Transverse colon (tissue), 4 donors: ENCODE measurements at regions of chr12 and their contacts with region 1.

Region 1: DNA sequence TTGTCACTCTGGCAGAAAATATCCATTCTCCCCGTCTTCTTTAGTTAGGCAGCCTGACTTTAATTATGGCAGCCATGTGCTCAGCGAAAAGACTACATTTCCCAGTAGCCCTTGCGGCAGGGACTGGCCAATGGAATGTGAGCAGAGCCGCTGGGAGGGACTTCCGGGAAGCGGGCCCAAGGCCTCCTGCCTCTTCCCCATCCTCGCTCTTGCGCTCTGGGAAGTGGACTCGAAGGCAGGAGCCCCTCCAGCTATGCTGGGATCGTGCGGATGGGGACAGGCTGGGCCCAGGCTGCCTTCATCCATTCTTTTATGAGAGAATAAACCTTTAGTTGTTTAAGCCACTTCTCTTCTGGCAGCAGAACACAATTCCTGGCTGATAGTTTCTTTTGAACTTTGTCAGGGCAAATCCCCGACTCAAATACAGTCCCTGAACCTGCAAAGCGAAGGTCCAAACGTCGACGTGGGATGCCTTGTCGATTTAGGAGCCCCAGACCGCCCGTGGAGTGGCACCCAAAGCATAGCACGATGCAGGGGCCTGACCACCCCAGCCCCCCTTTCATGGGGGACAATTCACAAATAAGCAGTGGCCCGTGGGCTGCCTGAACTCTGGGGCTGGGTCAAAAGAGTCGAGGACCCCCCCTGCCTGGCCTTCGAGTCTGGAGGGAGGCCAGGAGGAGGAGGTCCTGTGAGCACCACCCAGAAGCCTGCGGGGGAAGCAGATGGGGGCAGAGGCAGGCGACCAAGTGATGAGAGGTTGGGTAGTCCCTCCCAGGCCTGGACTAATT is 15.6 kb upstream of the LRTM2 start:
- DNase-seq: peak; percentile 90
- H3K4me3 ChIP-seq: no peak overlapping the region
- H3K27ac ChIP-seq: peak overlapping the region in 1 of 4 donors; percentile 21
- H3K4me1 ChIP-seq: peaks cover 0 to 4% (median 0%) of the 10 kb centered on the region in 4 donors
- H3K27me3 ChIP-seq: no peaks in the 10 kb centered on the region
- CTCF ChIP-seq: no peak
- EP300 ChIP-seq: no peak
- POLR2A ChIP-seq: no peak

Region 2: DNA sequence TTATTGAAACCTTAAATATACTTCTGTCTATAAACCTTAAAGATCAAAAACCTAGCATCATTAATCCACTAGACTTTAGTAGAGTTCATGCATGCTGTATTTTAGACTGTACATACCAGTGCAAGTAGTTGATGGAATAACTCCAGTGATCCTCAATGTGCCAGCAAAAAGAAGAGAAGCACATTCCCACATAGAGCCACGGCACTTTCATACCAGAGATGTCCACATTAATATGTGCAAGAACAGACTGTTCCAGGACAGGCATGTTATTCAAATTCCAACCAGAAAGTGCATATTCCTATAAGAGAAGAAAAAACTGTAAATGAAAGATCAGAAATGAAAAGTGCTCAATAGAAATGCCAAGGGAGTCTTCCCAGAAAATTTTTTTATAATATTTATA is 1470.6 kb before region 1 on chr12:
- in situ Hi-C with region 1: no loop called
- intact Hi-C with region 1: no loop called
- DNase-seq: no peak
- H3K4me3 ChIP-seq: no peak overlapping the region
- H3K27ac ChIP-seq: no peak overlapping the region
- H3K4me1 ChIP-seq: no peaks in the 10 kb centered on the region
- H3K27me3 ChIP-seq: no peaks in the 10 kb centered on the region
- CTCF ChIP-seq: no peak
- EP300 ChIP-seq: no peak
- POLR2A ChIP-seq: no peak

Region 3: GRCh38 chr12:1916371-1917171 is 111.8 kb after region 1 on chr12:
- in situ Hi-C with region 1: no loop called
- intact Hi-C with region 1: loop called (anchors 5 kb)
- DNase-seq: no peak
- H3K4me3 ChIP-seq: no peak overlapping the region
- H3K27ac ChIP-seq: no peak overlapping the region
- H3K4me1 ChIP-seq: peaks cover 0 to 5% (median 2%) of the 10 kb centered on the region in 4 donors
- H3K27me3 ChIP-seq: no peaks in the 10 kb centered on the region
- CTCF ChIP-seq: no peak
- EP300 ChIP-seq: no peak
- POLR2A ChIP-seq: no peak